ENCODE measurements at regions of chr3 and their contacts with region 1.

Region 1: GRCh38 chr3:197224034-197224444 is 74.4 kb downstream of the DLG1 start:
- DNase-seq: no peak
- ATAC-seq: no peak
- H3K4me3 Mint-ChIP-seq: no peak overlapping the region
- H3K27ac Mint-ChIP-seq: no peak overlapping the region
- H3K4me1 Mint-ChIP-seq: peaks cover 19% of the 10 kb centered on the region
- H3K27me3 Mint-ChIP-seq: no peaks in the 10 kb centered on the region
- CTCF ChIP-seq: no peak

Region 2: DNA sequence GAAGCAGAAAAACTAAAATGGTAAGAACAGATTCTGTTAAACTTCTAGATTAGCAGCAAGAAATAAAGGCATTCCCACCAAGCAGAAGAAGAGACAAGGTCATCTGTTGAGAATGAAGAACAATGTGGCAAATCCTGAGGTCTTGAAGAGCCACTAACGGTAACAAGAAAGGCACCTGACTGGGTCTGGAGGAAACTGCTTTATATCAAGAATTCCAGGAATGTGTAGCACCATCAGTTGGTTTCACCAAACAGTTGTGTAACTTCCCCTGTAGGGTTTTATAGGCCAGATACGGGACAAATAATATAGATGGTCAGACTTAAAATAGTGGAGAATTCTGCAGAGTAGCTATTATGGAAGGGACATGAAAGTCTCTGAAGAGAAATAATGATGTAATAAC is 1838.5 kb before region 1 on chr3:
- CTCF ChIA-PET with region 1: no interaction called
- POLR2A ChIA-PET with region 1: no interaction called
- intact Hi-C with region 1: no loop called
- DNase-seq: no peak
- ATAC-seq: no peak
- H3K4me3 Mint-ChIP-seq: no peak overlapping the region
- H3K27ac Mint-ChIP-seq: no peak overlapping the region
- H3K4me1 Mint-ChIP-seq: peaks cover 15% of the 10 kb centered on the region
- H3K27me3 Mint-ChIP-seq: no peaks in the 10 kb centered on the region
- CTCF ChIP-seq: no peak

Region 3: DNA sequence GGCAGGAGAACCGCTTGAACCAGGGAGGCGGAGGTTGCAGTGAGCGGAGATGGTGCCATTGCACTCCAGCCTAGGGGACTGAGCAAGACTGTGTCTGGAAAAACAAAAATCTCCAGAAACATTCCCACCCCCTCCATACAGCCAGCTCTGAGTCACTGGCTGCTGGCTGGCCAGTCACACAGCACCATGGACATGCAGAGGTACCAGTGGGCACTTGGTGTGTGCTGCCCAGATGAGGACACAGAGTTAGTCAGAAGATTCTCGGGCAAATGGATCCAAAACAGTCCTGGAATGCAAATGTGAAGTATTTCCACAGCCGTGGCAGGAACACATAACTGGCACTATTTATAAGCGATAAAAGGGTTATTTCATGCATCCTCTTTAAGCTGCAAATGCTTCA is 287.1 kb after region 1 on chr3:
- CTCF ChIA-PET with region 1: interaction called, 17 read pairs
- POLR2A ChIA-PET with region 1: no interaction called
- intact Hi-C with region 1: loop called (anchors 1 kb)
- DNase-seq: no peak
- ATAC-seq: no peak
- H3K4me3 Mint-ChIP-seq: no peak overlapping the region
- H3K27ac Mint-ChIP-seq: no peak overlapping the region
- H3K4me1 Mint-ChIP-seq: peaks cover 4% of the 10 kb centered on the region
- H3K27me3 Mint-ChIP-seq: no peaks in the 10 kb centered on the region
- CTCF ChIP-seq: no peak

Measured in activated B cell treated with CpG ODN at 0.5 μM for 24 hours (primary cell).